ENCODE measurements at regions of chr7 and their contacts with region 1.

Region 1: GRCh38 chr7:73811760-73812168 is 19.0 kb upstream of the CLDN4 start:
- DNase-seq: peak; percentile 73 to 76
- H3K4me3 ChIP-seq: no peak overlapping the region
- H3K27ac ChIP-seq: no peak overlapping the region
- H3K4me1 ChIP-seq: no peaks in the 10 kb centered on the region
- H3K27me3 ChIP-seq: peaks cover 0 to 16% of the 10 kb centered on the region in 2 donors
- CTCF ChIP-seq: peak; percentile 80 to 85

Region 2: DNA sequence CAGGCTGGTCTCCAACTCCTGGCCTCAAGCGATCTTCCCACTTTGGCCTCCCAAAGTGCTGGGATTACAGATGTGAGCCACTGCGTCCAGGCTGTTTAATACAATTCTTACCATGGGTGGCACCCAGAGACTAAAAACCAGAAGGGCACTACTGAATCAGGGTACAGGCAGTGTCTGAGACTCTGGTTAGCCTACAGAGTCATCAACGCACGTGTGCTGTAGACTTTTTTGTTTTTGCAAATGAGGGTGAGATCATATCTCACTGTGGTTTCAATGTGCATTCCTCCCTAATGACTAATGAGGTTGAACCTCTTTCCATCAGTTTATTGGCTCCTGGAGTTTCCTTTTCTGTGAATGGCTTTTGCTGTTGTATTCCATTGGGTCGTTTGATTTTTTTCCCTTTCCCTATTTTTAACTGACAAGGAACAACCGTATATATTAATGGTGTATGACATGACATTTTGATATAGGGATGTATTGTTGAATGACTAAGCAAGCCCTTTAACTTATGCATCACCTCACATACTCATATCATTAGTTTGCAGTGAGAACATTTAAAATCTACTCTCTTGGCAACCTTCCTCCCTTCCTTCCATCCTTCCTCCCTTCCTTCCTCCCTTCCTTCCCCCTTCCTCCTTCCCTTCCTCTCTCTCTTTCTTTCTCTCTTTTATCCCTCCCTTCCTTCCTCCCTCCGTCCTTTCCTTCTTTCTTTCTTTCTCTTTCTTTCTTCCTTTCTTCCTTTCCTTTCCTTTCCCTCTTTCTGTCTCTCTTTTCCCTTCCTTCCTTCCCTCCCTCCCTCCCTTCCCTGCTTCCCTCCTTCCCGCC is 39.9 kb after region 1 on chr7:
- intact Hi-C with region 1: loop called (anchors 1 kb)
- DNase-seq: no peak
- H3K4me3 ChIP-seq: no peak overlapping the region
- H3K27ac ChIP-seq: peak overlapping the region; percentile 59 to 60
- H3K4me1 ChIP-seq: peaks cover 0 to 29% (median 19%) of the 10 kb centered on the region in 4 donors
- H3K27me3 ChIP-seq: no peaks in the 10 kb centered on the region
- CTCF ChIP-seq: no peak

Measured in tibial artery (tissue), 4 donors.